ENCODE measurements at regions of chr6 and their contacts with region 1.

Region 1: DNA sequence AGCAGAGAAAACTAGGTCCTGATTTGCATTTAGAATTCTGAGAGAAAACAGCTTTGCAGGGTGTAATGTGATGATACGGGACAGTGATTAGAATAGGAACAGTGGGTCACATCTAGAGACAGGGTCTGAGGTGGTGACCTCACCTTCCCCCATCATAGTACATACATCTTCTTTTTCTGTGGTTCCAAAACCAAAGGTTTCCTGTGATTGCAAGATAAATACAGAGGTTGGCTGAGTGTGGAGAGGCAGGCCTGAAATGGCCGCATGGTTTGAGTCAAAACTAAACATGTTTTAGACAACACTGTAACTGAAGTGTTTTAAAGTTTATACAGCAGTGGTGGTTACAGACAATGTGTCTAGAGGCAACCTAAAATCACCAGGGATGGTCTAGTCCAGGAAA is 10.4 kb upstream of the NT5DC1 start:
- DNase-seq: no peak
- H3K4me3 ChIP-seq: no peak overlapping the region
- H3K27ac ChIP-seq: no peak overlapping the region
- H3K4me1 ChIP-seq: peaks cover 14% of the 10 kb centered on the region
- H3K27me3 ChIP-seq: no peaks in the 10 kb centered on the region
- CTCF ChIP-seq: no peak

Region 2: GRCh38 chr6:116010790-116011401 is 79.4 kb before region 1 on chr6:
- CTCF ChIA-PET with region 1: interaction called, 3 read pairs
- dilution Hi-C with region 1: loop called (anchors 5 kb)
- in situ Hi-C with region 1: loop called in 1 of 2 experiments (anchors 5 kb)
- intact Hi-C with region 1: no loop called
- DNase-seq: peak; percentile 58
- H3K4me3 ChIP-seq: no peak overlapping the region
- H3K27ac ChIP-seq: peak overlapping the region; percentile 73
- H3K4me1 ChIP-seq: peaks cover 47% of the 10 kb centered on the region
- H3K27me3 ChIP-seq: no peaks in the 10 kb centered on the region
- CTCF ChIP-seq: peak; percentile 76 to 91

Region 3: GRCh38 chr6:118086159-118086558 is 1995.9 kb after region 1 on chr6:
- CTCF ChIA-PET with region 1: no interaction called
- dilution Hi-C with region 1: no loop called
- in situ Hi-C with region 1: no loop called
- intact Hi-C with region 1: no loop called
- DNase-seq: no peak
- H3K4me3 ChIP-seq: no peak overlapping the region
- H3K27ac ChIP-seq: no peak overlapping the region
- H3K4me1 ChIP-seq: no peaks in the 10 kb centered on the region
- H3K27me3 ChIP-seq: peaks cover 3% of the 10 kb centered on the region
- CTCF ChIP-seq: no peak

Measured in mammary epithelial cell (primary cell).